AG04450 (cell line): ENCODE measurements at regions of chr11 and their contacts with region 1.

Region 1: GRCh38 chr11:18721561-18722292 is 4.3 kb downstream of the IGSF22 start:
- DNase-seq: no peak
- H3K4me3 ChIP-seq: peak overlapping the region; percentile 65
- H3K27ac ChIP-seq: no peak overlapping the region
- H3K27me3 ChIP-seq: peaks cover 6% of the 10 kb centered on the region
- CTCF ChIP-seq: peak; percentile 83

Region 2: GRCh38 chr11:18698341-18699268 is 23.1 kb before region 1 on chr11 and contains the start of gene TMEM86A:
- CTCF ChIA-PET with region 1: interaction called, 26 read pairs
- POLR2A ChIA-PET with region 1: no interaction called
- DNase-seq: no peak
- H3K4me3 ChIP-seq: peak within 1 kb of the TSS; percentile 62
- H3K27ac ChIP-seq: no peak within 1 kb of the TSS
- H3K27me3 ChIP-seq: peaks cover 17% of the 10 kb centered on the region
- CTCF ChIP-seq: no peak
- polyA plus RNA-seq, gene TMEM86A: 0.36 and 0.47 TPM in 2 replicates

Region 3: DNA sequence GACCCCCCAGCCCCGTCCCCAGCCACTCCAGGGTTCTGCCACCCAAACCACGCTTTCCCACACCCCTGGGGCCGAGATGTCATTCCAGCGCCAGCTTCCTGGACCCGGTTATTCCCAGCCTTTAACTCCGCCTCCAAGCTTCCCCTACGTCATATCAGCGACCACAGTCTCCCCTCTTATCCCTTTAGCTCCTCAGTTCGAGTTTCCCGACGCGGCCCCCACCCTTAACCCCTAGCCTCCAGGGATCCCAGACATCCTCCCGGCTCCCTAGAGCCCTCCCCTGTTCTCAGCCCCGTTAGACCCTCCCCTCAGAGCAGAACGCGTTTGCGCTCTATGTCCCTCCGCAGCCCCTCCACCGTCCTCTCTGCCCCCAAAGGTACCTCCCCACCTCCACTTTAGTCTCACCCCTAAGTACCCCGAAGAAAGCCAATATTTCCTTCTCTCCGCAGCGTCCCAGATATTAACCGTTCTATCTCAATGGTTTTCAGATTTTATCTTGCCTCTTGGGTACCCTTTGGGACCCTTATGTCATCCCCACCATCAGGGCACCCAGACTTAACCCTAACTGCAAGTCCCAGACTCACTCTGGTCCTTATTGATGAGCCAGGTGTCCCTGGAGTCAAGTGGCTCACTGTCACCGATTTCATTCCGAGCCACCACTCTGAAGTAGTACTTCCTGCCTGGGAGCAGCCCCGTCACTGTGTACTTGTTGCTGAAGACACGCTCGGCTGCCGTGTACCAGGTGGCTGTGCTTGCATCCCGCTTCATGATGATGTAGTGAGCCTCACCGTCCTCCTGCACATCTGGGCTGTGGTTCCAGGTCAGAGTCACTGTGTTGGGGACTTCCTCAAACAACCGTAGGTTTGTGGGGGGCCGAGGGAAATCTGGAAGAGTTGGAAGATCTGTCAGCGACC is 15.1 kb before region 1 on chr11:
- CTCF ChIA-PET with region 1: interaction called, 26 read pairs
- POLR2A ChIA-PET with region 1: no interaction called
- DNase-seq: no peak
- H3K4me3 ChIP-seq: peak overlapping the region; percentile 22; the same call in 1 of the 2 replicates
- H3K27ac ChIP-seq: no peak overlapping the region
- H3K27me3 ChIP-seq: peaks cover 41% of the 10 kb centered on the region
- CTCF ChIP-seq: no peak

Region 4: DNA sequence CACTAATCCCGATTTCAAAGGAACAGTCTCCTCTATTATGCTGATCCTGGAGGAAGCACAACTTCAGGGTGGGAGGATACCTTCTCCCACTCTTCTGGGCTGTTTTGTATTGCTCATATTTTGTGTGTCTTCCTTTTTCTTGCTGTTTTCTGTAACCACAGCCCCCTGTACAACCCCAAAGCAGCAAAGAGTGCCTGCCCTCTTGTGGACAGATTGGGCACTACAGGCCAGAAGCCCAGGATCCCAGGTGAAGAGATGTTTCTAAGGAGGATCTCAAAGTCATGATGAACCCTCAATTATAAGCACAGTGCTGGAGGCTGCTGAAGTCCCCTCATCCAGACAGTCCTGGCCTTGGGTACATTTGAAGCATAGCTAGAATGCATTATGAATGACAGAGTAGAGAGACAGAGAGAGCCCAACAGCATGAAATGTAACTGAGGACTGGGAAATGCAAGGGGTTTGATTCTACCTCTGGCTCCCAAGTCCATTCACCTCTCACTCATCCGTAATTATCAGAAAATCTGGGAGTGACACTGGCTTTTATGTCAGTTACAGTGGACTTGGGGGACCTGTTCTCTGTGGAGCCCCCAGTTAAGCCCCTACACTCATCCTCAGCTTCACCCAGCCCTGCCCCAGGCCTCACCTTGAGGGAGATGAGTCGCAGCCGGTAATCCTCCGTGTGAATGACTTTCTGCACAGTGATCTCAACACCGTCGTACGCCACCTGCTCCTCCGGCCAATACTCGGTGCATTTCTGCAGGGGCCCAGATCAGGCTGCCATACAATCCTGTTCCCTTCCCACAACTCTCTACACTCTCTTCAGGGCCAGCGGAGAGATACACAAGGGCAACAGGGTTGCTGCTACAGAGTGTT is 10.5 kb after region 1 on chr11:
- CTCF ChIA-PET with region 1: interaction called, 51 read pairs
- POLR2A ChIA-PET with region 1: no interaction called
- DNase-seq: no peak
- H3K4me3 ChIP-seq: no peak overlapping the region
- H3K27ac ChIP-seq: no peak overlapping the region
- H3K27me3 ChIP-seq: peaks cover 5% of the 10 kb centered on the region
- CTCF ChIP-seq: peak; percentile 98

Region 5: DNA sequence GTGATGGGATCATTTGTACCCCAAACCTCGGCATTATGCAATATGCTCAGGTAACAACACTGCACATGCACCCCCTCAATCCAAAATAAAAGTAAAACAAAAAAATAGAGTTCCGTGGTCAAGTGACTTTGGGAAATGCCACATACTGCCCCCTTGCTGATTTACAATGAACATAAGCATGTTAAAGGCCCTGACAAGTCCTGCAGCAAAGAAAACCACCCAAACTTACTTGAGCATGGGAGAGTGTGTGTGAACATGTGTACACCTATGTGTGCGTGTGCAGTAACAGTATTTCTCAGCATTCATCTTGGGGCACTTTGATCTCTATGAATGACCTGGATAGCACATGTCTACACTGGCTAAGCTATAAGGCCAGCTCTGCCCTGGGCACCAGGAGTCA is 20.1 kb after region 1 on chr11:
- CTCF ChIA-PET with region 1: interaction called, 14 read pairs
- POLR2A ChIA-PET with region 1: no interaction called
- DNase-seq: no peak
- H3K4me3 ChIP-seq: no peak overlapping the region
- H3K27ac ChIP-seq: no peak overlapping the region
- H3K27me3 ChIP-seq: peaks cover 10% of the 10 kb centered on the region
- CTCF ChIP-seq: no peak

Region 6: GRCh38 chr11:18757811-18758210 is 36.1 kb after region 1 on chr11:
- CTCF ChIA-PET with region 1: interaction called, 14 read pairs
- POLR2A ChIA-PET with region 1: no interaction called
- DNase-seq: peak; percentile 11
- H3K4me3 ChIP-seq: no peak overlapping the region
- H3K27ac ChIP-seq: no peak overlapping the region
- H3K27me3 ChIP-seq: no peaks in the 10 kb centered on the region
- CTCF ChIP-seq: no peak

Region 7: DNA sequence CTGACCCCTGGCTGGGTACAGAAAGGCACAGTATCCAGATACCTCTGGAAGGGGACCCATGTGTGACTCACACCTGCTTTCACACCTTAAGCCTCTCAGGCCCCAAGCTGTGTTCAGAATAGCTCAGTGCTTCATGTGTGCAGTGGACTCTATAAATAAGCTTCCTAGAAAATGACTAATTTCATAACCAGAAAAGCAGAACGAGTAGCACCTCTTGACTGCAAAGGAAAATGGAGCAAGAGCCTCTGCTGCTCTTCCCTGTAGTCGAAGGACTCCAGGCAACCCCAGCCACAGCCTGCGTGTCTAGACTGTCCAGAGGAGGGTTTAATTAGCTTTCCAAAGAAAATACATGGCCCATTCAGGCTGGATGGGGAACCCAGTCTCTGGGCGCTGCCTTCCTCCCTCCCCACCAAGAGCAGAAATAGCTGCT is 46.8 kb after region 1 on chr11:
- CTCF ChIA-PET with region 1: interaction called, 10 read pairs
- POLR2A ChIA-PET with region 1: no interaction called
- DNase-seq: no peak
- H3K4me3 ChIP-seq: no peak overlapping the region
- H3K27ac ChIP-seq: no peak overlapping the region
- H3K27me3 ChIP-seq: peaks cover 11% of the 10 kb centered on the region
- CTCF ChIP-seq: no peak